Natural killer cell (primary cell): ENCODE measurements at regions of chr1 and their contacts with region 1.

Region 1: GRCh38 chr1:8423650-8424538 is 106.0 kb downstream of the SLC45A1 start:
- DNase-seq: peak; percentile 47 to 67
- ATAC-seq: peak; percentile 48 to 60 (median 57)
- H3K4me3 ChIP-seq: peak overlapping the region; percentile 70
- H3K4me3 Mint-ChIP-seq: peak overlapping the region; percentile 96
- H3K27ac ChIP-seq: peak overlapping the region; percentile 65
- H3K27ac Mint-ChIP-seq: peak overlapping the region; percentile 80 to 91
- H3K4me1 ChIP-seq: peaks cover 49% of the 10 kb centered on the region
- H3K4me1 Mint-ChIP-seq: peaks cover 39 to 54% of the 10 kb centered on the region in 2 donors
- H3K27me3 ChIP-seq: no peaks in the 10 kb centered on the region
- H3K27me3 Mint-ChIP-seq: peaks cover 8 to 12% of the 10 kb centered on the region in 2 donors
- CTCF ChIP-seq: no peak

Region 2: GRCh38 chr1:8342325-8342724 is 81.6 kb before region 1 on chr1:
- intact Hi-C with region 1: no loop called
- DNase-seq: no peak
- ATAC-seq: no peak
- H3K4me3 ChIP-seq: no peak overlapping the region
- H3K4me3 Mint-ChIP-seq: no peak overlapping the region
- H3K27ac ChIP-seq: no peak overlapping the region
- H3K27ac Mint-ChIP-seq: no peak overlapping the region
- H3K4me1 ChIP-seq: no peaks in the 10 kb centered on the region
- H3K4me1 Mint-ChIP-seq: no peaks in the 10 kb centered on the region
- H3K27me3 ChIP-seq: no peaks in the 10 kb centered on the region
- H3K27me3 Mint-ChIP-seq: peaks cover 0 to 4% of the 10 kb centered on the region in 2 donors
- CTCF ChIP-seq: no peak

Region 3: DNA sequence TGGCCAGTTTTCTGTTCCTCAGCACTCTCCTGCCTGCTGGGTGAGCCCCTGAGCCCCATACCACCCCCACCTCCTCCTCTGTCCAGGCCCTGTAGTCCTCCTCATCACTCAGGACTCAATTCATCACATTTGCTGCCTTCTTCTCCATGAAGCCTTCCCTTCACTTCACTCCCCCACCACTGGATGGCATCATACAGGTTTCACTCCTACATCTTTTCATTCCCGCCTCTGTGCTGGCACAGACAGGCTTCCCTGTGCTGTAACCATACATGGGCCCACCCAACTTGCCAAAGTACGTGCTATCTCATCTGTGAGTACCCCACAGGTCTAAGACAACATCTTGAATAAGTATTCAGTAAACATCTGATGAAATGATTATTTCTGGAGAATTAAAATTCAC is 49.1 kb before region 1 on chr1:
- intact Hi-C with region 1: loop called (anchors 5 kb)
- DNase-seq: peak in 1 of 2 donors; percentile 58
- ATAC-seq: peak in 1 of 3 donors; percentile 20
- H3K4me3 ChIP-seq: no peak overlapping the region
- H3K4me3 Mint-ChIP-seq: no peak overlapping the region
- H3K27ac ChIP-seq: no peak overlapping the region
- H3K27ac Mint-ChIP-seq: peak overlapping the region in 1 of 2 donors; percentile 23
- H3K4me1 ChIP-seq: peaks cover 12% of the 10 kb centered on the region
- H3K4me1 Mint-ChIP-seq: peaks cover 21 to 47% of the 10 kb centered on the region in 2 donors
- H3K27me3 ChIP-seq: no peaks in the 10 kb centered on the region
- H3K27me3 Mint-ChIP-seq: no peaks in the 10 kb centered on the region
- CTCF ChIP-seq: no peak

Region 4: GRCh38 chr1:8456308-8456912 is 32.5 kb after region 1 on chr1:
- intact Hi-C with region 1: no loop called
- DNase-seq: no peak
- ATAC-seq: no peak
- H3K4me3 ChIP-seq: no peak overlapping the region
- H3K4me3 Mint-ChIP-seq: no peak overlapping the region
- H3K27ac ChIP-seq: no peak overlapping the region
- H3K27ac Mint-ChIP-seq: peak overlapping the region in 1 of 2 donors; percentile 5
- H3K4me1 ChIP-seq: no peaks in the 10 kb centered on the region
- H3K4me1 Mint-ChIP-seq: peaks cover 3 to 19% of the 10 kb centered on the region in 2 donors
- H3K27me3 ChIP-seq: no peaks in the 10 kb centered on the region
- H3K27me3 Mint-ChIP-seq: no peaks in the 10 kb centered on the region
- CTCF ChIP-seq: no peak

Region 5: GRCh38 chr1:8477166-8477982 is 53.5 kb after region 1 on chr1:
- intact Hi-C with region 1: loop called (anchors 10 kb)
- DNase-seq: no peak
- ATAC-seq: peak in 2 of 3 donors; percentile 18 to 40
- H3K4me3 ChIP-seq: no peak overlapping the region
- H3K4me3 Mint-ChIP-seq: no peak overlapping the region
- H3K27ac ChIP-seq: no peak overlapping the region
- H3K27ac Mint-ChIP-seq: no peak overlapping the region
- H3K4me1 ChIP-seq: peaks cover 4% of the 10 kb centered on the region
- H3K4me1 Mint-ChIP-seq: peaks cover 31 to 39% of the 10 kb centered on the region in 2 donors
- H3K27me3 ChIP-seq: no peaks in the 10 kb centered on the region
- H3K27me3 Mint-ChIP-seq: peaks cover 4 to 12% of the 10 kb centered on the region in 2 donors
- CTCF ChIP-seq: no peak

Region 6: GRCh38 chr1:8702850-8703810 is 279.2 kb after region 1 on chr1:
- intact Hi-C with region 1: loop called (anchors 5 kb)
- DNase-seq: peak; percentile 68 to 75
- ATAC-seq: peak; percentile 70 to 86 (median 77)
- H3K4me3 ChIP-seq: peak overlapping the region; percentile 39
- H3K4me3 Mint-ChIP-seq: peak overlapping the region; percentile 93
- H3K27ac ChIP-seq: no peak overlapping the region
- H3K27ac Mint-ChIP-seq: peak overlapping the region; percentile 81 to 90
- H3K4me1 ChIP-seq: peaks cover 22% of the 10 kb centered on the region
- H3K4me1 Mint-ChIP-seq: peaks cover 34 to 38% of the 10 kb centered on the region in 2 donors
- H3K27me3 ChIP-seq: peaks cover 4% of the 10 kb centered on the region
- H3K27me3 Mint-ChIP-seq: no peaks in the 10 kb centered on the region
- CTCF ChIP-seq: no peak